ENCODE measurements at regions of chr1 and their contacts with region 1.

Region 1: GRCh38 chr1:55117941-55118340 is 78.6 kb downstream of the PCSK9 start:
- DNase-seq: no peak
- H3K4me3 Mint-ChIP-seq: no peak overlapping the region
- H3K27ac Mint-ChIP-seq: no peak overlapping the region
- H3K4me1 Mint-ChIP-seq: peaks cover 15% of the 10 kb centered on the region
- H3K27me3 Mint-ChIP-seq: no peaks in the 10 kb centered on the region

Region 2: DNA sequence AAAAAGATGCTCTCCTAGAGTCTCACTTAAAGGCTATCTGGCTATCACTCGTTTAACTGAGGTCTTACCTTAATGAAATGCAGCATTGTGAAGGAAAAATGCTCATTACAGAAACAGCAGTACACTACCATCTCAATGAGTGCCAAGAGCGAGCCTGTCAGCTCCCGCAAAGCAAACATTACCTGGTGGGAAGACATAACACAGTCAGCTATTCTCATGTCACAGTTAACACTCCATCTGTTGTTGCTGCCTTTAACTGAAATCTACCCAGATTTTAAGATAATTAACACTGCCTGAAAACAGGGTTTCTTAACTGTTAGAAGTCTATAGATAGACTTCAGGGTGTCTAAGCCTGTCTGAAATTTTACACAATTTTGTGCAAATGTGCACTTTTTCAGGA is 39.5 kb before region 1 on chr1:
- CTCF ChIA-PET with region 1: no interaction called
- intact Hi-C with region 1: loop called (anchors 5 kb)
- DNase-seq: no peak
- H3K4me3 Mint-ChIP-seq: no peak overlapping the region
- H3K27ac Mint-ChIP-seq: no peak overlapping the region
- H3K4me1 Mint-ChIP-seq: peaks cover 6% of the 10 kb centered on the region
- H3K27me3 Mint-ChIP-seq: no peaks in the 10 kb centered on the region

Region 3: DNA sequence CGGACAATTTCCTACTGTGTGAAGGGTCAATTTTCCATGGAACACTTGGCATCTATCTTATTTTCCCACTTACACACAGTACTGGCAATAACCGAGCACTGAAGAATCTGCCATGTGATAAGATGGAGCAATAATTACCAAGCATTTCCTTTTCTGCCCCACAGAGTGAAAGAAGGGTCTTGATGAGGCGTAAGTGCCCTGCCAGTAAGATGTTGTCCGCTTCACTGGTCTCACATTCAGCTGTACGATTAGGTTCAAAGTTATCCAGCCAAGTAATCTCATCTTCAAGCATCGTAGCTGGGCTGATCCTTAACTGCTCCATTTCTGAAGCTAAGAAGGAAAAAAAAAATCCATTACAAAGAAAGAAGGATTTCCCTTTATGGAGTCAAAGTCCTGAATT is 10.8 kb before region 1 on chr1:
- CTCF ChIA-PET with region 1: no interaction called
- intact Hi-C with region 1: no loop called
- DNase-seq: no peak
- H3K4me3 Mint-ChIP-seq: no peak overlapping the region
- H3K27ac Mint-ChIP-seq: no peak overlapping the region
- H3K4me1 Mint-ChIP-seq: peaks cover 2% of the 10 kb centered on the region
- H3K27me3 Mint-ChIP-seq: no peaks in the 10 kb centered on the region

Region 4: DNA sequence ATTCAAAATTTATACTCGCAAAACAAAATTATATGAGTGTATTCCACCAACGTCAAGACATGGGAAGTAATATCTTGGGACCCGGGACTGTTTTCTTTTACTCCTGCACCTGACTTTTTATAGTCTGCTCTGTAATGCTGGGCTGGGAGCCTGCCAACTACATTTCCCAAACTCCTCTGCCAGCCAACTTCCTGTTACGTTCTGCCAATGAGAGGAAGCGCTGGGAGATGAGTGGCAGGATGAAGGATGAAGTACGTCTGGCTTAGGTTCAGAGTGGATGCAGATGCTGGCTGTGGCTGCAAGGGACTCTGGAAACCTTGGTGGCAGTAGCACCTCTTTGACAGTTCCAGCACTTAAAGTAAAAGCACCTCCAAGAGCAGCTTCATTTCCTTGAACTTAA is 37.6 kb after region 1 on chr1:
- CTCF ChIA-PET with region 1: no interaction called
- intact Hi-C with region 1: no loop called
- DNase-seq: peak; percentile 23
- H3K4me3 Mint-ChIP-seq: no peak overlapping the region
- H3K27ac Mint-ChIP-seq: no peak overlapping the region
- H3K4me1 Mint-ChIP-seq: peaks cover 37% of the 10 kb centered on the region
- H3K27me3 Mint-ChIP-seq: no peaks in the 10 kb centered on the region